GM12878 (cell line): ENCODE measurements at regions of chr9 and their contacts with region 1.

Region 1: GRCh38 chr9:36873247-36873875 is 160.7 kb downstream of the PAX5 start:
- DNase-seq: peak; percentile 28
- ATAC-seq: peak; percentile 95
- H3K4me3 ChIP-seq: no peak overlapping the region
- H3K27ac ChIP-seq: no peak overlapping the region
- H3K4me1 ChIP-seq: peaks cover 27% of the 10 kb centered on the region
- H3K27me3 ChIP-seq: no peaks in the 10 kb centered on the region
- CTCF ChIP-seq: peak; percentile 86 to 91 (median 89); a peak in 5 of 6 replicates
- EP300 ChIP-seq: no peak
- POLR2A ChIP-seq: no peak
- RAD21 ChIP-seq: peak; percentile 86

Region 2: GRCh38 chr9:36584622-36585470 is 288.5 kb before region 1 on chr9:
- CTCF ChIA-PET with region 1: no interaction called
- POLR2A ChIA-PET with region 1: no interaction called
- RAD21 ChIA-PET with region 1: no interaction called
- SMC1A ChIA-PET with region 1: no interaction called
- in situ Hi-C with region 1: no loop called
- intact Hi-C with region 1: no loop called
- DNase-seq: no peak
- ATAC-seq: no peak
- H3K4me3 ChIP-seq: no peak overlapping the region
- H3K27ac ChIP-seq: no peak overlapping the region
- H3K4me1 ChIP-seq: no peaks in the 10 kb centered on the region
- H3K27me3 ChIP-seq: no peaks in the 10 kb centered on the region
- CTCF ChIP-seq: no peak
- EP300 ChIP-seq: no peak
- POLR2A ChIP-seq: no peak
- RAD21 ChIP-seq: no peak

Region 3: GRCh38 chr9:36855448-36856315 is 17.7 kb before region 1 on chr9:
- CTCF ChIA-PET with region 1: interaction called, 22 read pairs
- POLR2A ChIA-PET with region 1: no interaction called
- RAD21 ChIA-PET with region 1: no interaction called
- SMC1A ChIA-PET with region 1: interaction called, 3 read pairs
- in situ Hi-C with region 1: no loop called
- intact Hi-C with region 1: no loop called
- DNase-seq: no peak
- ATAC-seq: peak; percentile 91
- H3K4me3 ChIP-seq: no peak overlapping the region
- H3K27ac ChIP-seq: no peak overlapping the region; the same call in 1 of the 2 replicates
- H3K4me1 ChIP-seq: peaks cover 12% of the 10 kb centered on the region
- H3K27me3 ChIP-seq: no peaks in the 10 kb centered on the region
- CTCF ChIP-seq: peak; percentile 24 to 42 (median 41); a peak in 4 of 6 replicates
- EP300 ChIP-seq: no peak
- POLR2A ChIP-seq: no peak
- RAD21 ChIP-seq: 0 out of 2 replicates have a peak, but pooled peaks have one; percentile 7

Region 4: GRCh38 chr9:36884721-36885120 is 11.4 kb after region 1 on chr9:
- CTCF ChIA-PET with region 1: interaction called, 22 read pairs
- POLR2A ChIA-PET with region 1: no interaction called
- RAD21 ChIA-PET with region 1: interaction called, 3 read pairs
- SMC1A ChIA-PET with region 1: interaction called, 6 read pairs
- in situ Hi-C with region 1: no loop called
- intact Hi-C with region 1: no loop called
- DNase-seq: no peak
- ATAC-seq: no peak
- H3K4me3 ChIP-seq: no peak overlapping the region
- H3K27ac ChIP-seq: no peak overlapping the region
- H3K4me1 ChIP-seq: peaks cover 7% of the 10 kb centered on the region
- H3K27me3 ChIP-seq: no peaks in the 10 kb centered on the region
- CTCF ChIP-seq: no peak
- EP300 ChIP-seq: no peak
- POLR2A ChIP-seq: 0 out of 2 replicates have a peak, but pooled peaks have one; percentile 4
- RAD21 ChIP-seq: no peak

Region 5: DNA sequence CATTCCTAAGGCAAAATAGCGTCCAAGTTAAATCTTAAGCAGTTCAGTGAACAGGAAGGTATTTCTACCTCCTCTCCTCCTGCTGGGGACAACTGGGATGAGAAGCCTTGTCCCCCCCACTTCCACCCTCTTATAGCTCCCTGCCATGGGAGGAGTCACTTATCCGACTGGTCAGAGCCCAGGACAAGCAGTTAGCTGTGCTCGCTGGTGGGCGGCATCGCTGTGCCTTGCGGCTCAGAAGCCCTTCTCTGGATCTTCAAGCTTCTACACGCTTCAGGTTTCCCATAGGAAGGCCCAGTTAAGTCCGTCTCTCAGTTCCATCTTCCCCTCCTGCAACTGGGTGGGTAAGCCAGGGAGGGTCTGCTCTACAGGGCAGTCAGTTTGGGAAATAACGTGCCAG is 83.5 kb after region 1 on chr9:
- CTCF ChIA-PET with region 1: interaction called, 11 read pairs
- POLR2A ChIA-PET with region 1: no interaction called
- RAD21 ChIA-PET with region 1: interaction called, 3 read pairs
- SMC1A ChIA-PET with region 1: interaction called, 4 read pairs
- in situ Hi-C with region 1: no loop called
- intact Hi-C with region 1: no loop called
- DNase-seq: no peak
- ATAC-seq: no peak
- H3K4me3 ChIP-seq: no peak overlapping the region
- H3K27ac ChIP-seq: no peak overlapping the region
- H3K4me1 ChIP-seq: no peaks in the 10 kb centered on the region
- H3K27me3 ChIP-seq: no peaks in the 10 kb centered on the region
- CTCF ChIP-seq: no peak
- EP300 ChIP-seq: no peak
- POLR2A ChIP-seq: no peak
- RAD21 ChIP-seq: no peak

Region 6: DNA sequence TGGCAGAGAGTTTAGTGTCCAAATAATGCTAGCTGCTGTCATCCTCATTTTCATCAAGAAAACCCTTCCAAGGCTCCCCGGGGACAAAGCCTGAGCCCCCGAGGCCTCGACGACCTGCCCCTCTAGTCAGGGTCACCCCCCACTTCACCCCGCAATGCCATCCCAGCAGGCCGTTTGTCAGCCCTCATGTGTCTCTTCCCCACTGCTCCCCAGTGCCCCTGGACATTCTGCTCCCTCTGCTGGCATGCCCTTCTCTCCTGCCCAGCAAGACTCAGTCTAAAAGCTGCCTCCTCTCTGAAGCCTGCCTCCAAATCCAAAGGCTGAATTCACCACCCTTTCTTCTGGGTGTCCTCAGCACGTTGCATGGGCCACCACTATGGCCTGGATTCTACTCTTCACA is 101.4 kb after region 1 on chr9:
- CTCF ChIA-PET with region 1: interaction called, 19 read pairs
- POLR2A ChIA-PET with region 1: no interaction called
- RAD21 ChIA-PET with region 1: interaction called, 4 read pairs
- SMC1A ChIA-PET with region 1: interaction called, 4 read pairs
- in situ Hi-C with region 1: no loop called
- intact Hi-C with region 1: no loop called
- DNase-seq: no peak
- ATAC-seq: no peak
- H3K4me3 ChIP-seq: no peak overlapping the region
- H3K27ac ChIP-seq: no peak overlapping the region
- H3K4me1 ChIP-seq: no peaks in the 10 kb centered on the region
- H3K27me3 ChIP-seq: no peaks in the 10 kb centered on the region
- CTCF ChIP-seq: peak in 1 of 3 experiments; percentile 26; a peak in 2 of 6 replicates
- EP300 ChIP-seq: no peak
- POLR2A ChIP-seq: 0 out of 2 replicates have a peak, but pooled peaks have one; percentile 29
- RAD21 ChIP-seq: no peak

Region 7: GRCh38 chr9:36987891-36988290 is 114.5 kb after region 1 on chr9:
- CTCF ChIA-PET with region 1: interaction called, 56 read pairs
- POLR2A ChIA-PET with region 1: no interaction called
- RAD21 ChIA-PET with region 1: interaction called, 37 read pairs
- SMC1A ChIA-PET with region 1: interaction called, 11 read pairs
- in situ Hi-C with region 1: no loop called
- intact Hi-C with region 1: loop called (anchors 1 kb)
- DNase-seq: no peak
- ATAC-seq: no peak
- H3K4me3 ChIP-seq: no peak overlapping the region
- H3K27ac ChIP-seq: peak overlapping the region; percentile 54; the same call in 1 of the 2 replicates
- H3K4me1 ChIP-seq: peaks cover 32% of the 10 kb centered on the region
- H3K27me3 ChIP-seq: no peaks in the 10 kb centered on the region
- CTCF ChIP-seq: no peak
- EP300 ChIP-seq: no peak
- POLR2A ChIP-seq: no peak
- RAD21 ChIP-seq: no peak

Region 8: GRCh38 chr9:37119907-37120842 is 246.8 kb after region 1 on chr9 and contains the start of gene ZCCHC7:
- CTCF ChIA-PET with region 1: interaction called, 5 read pairs
- POLR2A ChIA-PET with region 1: no interaction called
- RAD21 ChIA-PET with region 1: interaction called, 4 read pairs
- SMC1A ChIA-PET with region 1: interaction called, 3 read pairs
- in situ Hi-C with region 1: no loop called
- intact Hi-C with region 1: loop called (anchors 10 kb)
- DNase-seq: peak; percentile 89
- ATAC-seq: peak; percentile 94
- H3K4me3 ChIP-seq: peak within 1 kb of the TSS; percentile 93
- H3K27ac ChIP-seq: peak within 1 kb of the TSS; percentile 93
- H3K4me1 ChIP-seq: peaks cover 8% of the 10 kb centered on the region
- H3K27me3 ChIP-seq: no peaks in the 10 kb centered on the region
- CTCF ChIP-seq: no peak
- EP300 ChIP-seq: no peak
- POLR2A ChIP-seq: peak; percentile 92
- RAD21 ChIP-seq: no peak
- polyA plus RNA-seq, gene ZCCHC7: 58.6 to 60.8 TPM

Region 9: DNA sequence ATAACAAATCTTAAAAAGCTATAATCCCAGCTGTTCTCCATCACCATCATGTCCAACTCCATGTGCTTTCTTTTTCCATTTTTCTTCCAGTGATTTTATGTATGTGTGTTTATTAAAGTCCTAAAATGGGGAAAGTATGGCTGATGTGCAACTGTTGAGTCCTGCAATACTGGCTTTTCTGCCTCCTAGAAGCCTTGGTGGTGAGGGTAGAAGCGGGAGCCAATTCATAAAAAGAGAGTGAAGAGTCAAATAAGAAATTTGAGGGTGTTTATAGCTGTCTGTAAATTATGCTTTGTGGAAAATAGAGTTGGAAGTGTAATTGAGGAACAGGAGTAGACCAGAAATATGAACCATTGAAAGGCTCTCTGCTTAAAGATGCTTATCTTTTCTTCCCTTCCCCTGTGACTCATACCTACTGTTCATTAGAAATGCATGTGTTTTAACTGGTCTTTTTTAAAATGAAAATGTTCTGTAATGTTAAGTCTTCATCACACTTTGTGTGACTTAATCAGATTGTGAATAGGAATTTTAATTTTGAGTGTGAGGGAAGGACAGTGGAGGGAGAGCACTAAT is 327.2 kb after region 1 on chr9:
- CTCF ChIA-PET with region 1: no interaction called
- POLR2A ChIA-PET with region 1: no interaction called
- RAD21 ChIA-PET with region 1: no interaction called
- SMC1A ChIA-PET with region 1: no interaction called
- in situ Hi-C with region 1: no loop called
- intact Hi-C with region 1: no loop called
- DNase-seq: no peak
- ATAC-seq: no peak
- H3K4me3 ChIP-seq: no peak overlapping the region
- H3K27ac ChIP-seq: no peak overlapping the region
- H3K4me1 ChIP-seq: peaks cover 26% of the 10 kb centered on the region
- H3K27me3 ChIP-seq: no peaks in the 10 kb centered on the region
- CTCF ChIP-seq: no peak
- EP300 ChIP-seq: no peak
- POLR2A ChIP-seq: no peak
- RAD21 ChIP-seq: no peak